ENCODE measurements at regions of chr18 and their contacts with region 1.

Region 1: GRCh38 chr18:10153924-10154752 is 240.3 kb downstream of the VAPA start:
- H3K4me3 Mint-ChIP-seq: no peak overlapping the region
- H3K27ac Mint-ChIP-seq: no peak overlapping the region
- H3K4me1 Mint-ChIP-seq: peaks cover 13% of the 10 kb centered on the region
- H3K27me3 Mint-ChIP-seq: no peaks in the 10 kb centered on the region

Region 2: GRCh38 chr18:10190564-10190963 is 36.4 kb after region 1 on chr18:
- intact Hi-C with region 1: loop called (anchors 1 kb)
- H3K4me3 Mint-ChIP-seq: no peak overlapping the region
- H3K27ac Mint-ChIP-seq: no peak overlapping the region
- H3K4me1 Mint-ChIP-seq: peaks cover 20% of the 10 kb centered on the region
- H3K27me3 Mint-ChIP-seq: no peaks in the 10 kb centered on the region

Region 3: DNA sequence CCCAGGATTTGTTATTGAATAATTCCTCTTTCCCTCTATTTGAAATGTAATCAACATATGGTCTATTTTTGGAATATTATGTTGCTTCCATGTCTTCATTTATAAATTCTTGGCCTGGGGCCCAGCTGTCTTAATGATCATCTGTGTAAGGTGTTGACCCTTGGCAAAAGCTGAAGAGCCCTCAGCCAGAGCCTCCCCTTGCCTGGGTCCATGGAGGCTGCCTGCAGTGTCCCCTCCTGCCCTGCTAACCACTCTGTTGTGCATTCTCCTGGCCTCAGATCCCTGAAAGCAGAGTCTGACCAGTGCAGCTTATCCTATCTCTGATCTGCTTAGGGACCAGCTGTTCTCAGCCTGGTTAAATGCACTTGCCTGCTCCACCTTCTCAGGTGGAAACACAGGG is 74.2 kb after region 1 on chr18:
- intact Hi-C with region 1: no loop called
- H3K4me3 Mint-ChIP-seq: no peak overlapping the region
- H3K27ac Mint-ChIP-seq: no peak overlapping the region
- H3K4me1 Mint-ChIP-seq: no peaks in the 10 kb centered on the region
- H3K27me3 Mint-ChIP-seq: no peaks in the 10 kb centered on the region

Measured in dendritic cell treated with granulocyte-macrophage colony-stimulating factor and Interleukin-4, amounts not matched to agents 40 ng/mL and 50 ng/mL, for 4 days (primary cell).